GM12878 (cell line): ENCODE measurements at regions of chr5 and their contacts with region 1.

Region 1: GRCh38 chr5:151771259-151772028 is at the start of gene G3BP1:
- DNase-seq: peak; percentile 100
- ATAC-seq: peak; percentile 87
- H3K4me3 ChIP-seq: peak within 1 kb of the TSS; percentile 97
- H3K27ac ChIP-seq: peak within 1 kb of the TSS; percentile 98
- H3K4me1 ChIP-seq: peaks cover 10% of the 10 kb centered on the region
- H3K27me3 ChIP-seq: no peaks in the 10 kb centered on the region
- CTCF ChIP-seq: peak; percentile 64 to 99 (median 71); a peak in 4 of 6 replicates
- EP300 ChIP-seq: no peak
- POLR2A ChIP-seq: peak; percentile 18
- RAD21 ChIP-seq: peak; percentile 67
- polyA plus RNA-seq, gene G3BP1: 49.7 to 52.7 TPM

Region 2: GRCh38 chr5:151157426-151158286 is 613.8 kb before region 1 on chr5 and contains the start of gene ANXA6:
- CTCF ChIA-PET with region 1: no interaction called
- POLR2A ChIA-PET with region 1: no interaction called
- RAD21 ChIA-PET with region 1: no interaction called
- SMC1A ChIA-PET with region 1: no interaction called
- in situ Hi-C with region 1: no loop called
- intact Hi-C with region 1: loop called (anchors 10 kb)
- DNase-seq: no peak
- ATAC-seq: peak; percentile 77
- H3K4me3 ChIP-seq: peak within 1 kb of the TSS; percentile 97
- H3K27ac ChIP-seq: peak within 1 kb of the TSS; percentile 89
- H3K4me1 ChIP-seq: peaks cover 26% of the 10 kb centered on the region
- H3K27me3 ChIP-seq: no peaks in the 10 kb centered on the region
- CTCF ChIP-seq: no peak
- EP300 ChIP-seq: no peak
- POLR2A ChIP-seq: peak; percentile 81
- RAD21 ChIP-seq: no peak
- polyA plus RNA-seq, gene ANXA6: 44.0 to 73.1 TPM

Region 3: GRCh38 chr5:151751091-151751490 is 20.4 kb before region 1 on chr5:
- CTCF ChIA-PET with region 1: interaction called, 23 read pairs
- POLR2A ChIA-PET with region 1: interaction called, 241 read pairs
- RAD21 ChIA-PET with region 1: interaction called, 90 read pairs
- SMC1A ChIA-PET with region 1: interaction called, 84 read pairs
- in situ Hi-C with region 1: no loop called
- intact Hi-C with region 1: no loop called
- DNase-seq: no peak
- ATAC-seq: no peak
- H3K4me3 ChIP-seq: no peak overlapping the region
- H3K27ac ChIP-seq: no peak overlapping the region
- H3K4me1 ChIP-seq: peaks cover 29% of the 10 kb centered on the region
- H3K27me3 ChIP-seq: no peaks in the 10 kb centered on the region
- CTCF ChIP-seq: no peak
- EP300 ChIP-seq: no peak
- POLR2A ChIP-seq: no peak
- RAD21 ChIP-seq: no peak

Region 4: GRCh38 chr5:151758430-151759241 is 12.8 kb before region 1 on chr5 and contains the start of gene ATOX1:
- CTCF ChIA-PET with region 1: interaction called, 23 read pairs
- POLR2A ChIA-PET with region 1: interaction called, 241 read pairs
- RAD21 ChIA-PET with region 1: interaction called, 90 read pairs
- SMC1A ChIA-PET with region 1: interaction called, 84 read pairs
- in situ Hi-C with region 1: no loop called
- intact Hi-C with region 1: loop called (anchors 1 kb)
- DNase-seq: peak; percentile 58
- ATAC-seq: peak; percentile 96
- H3K4me3 ChIP-seq: peak within 1 kb of the TSS; percentile 98
- H3K27ac ChIP-seq: peak within 1 kb of the TSS; percentile 86
- H3K4me1 ChIP-seq: peaks cover 23% of the 10 kb centered on the region
- H3K27me3 ChIP-seq: no peaks in the 10 kb centered on the region
- CTCF ChIP-seq: peak in 1 of 3 experiments; percentile 9; a peak in 1 of 6 replicates
- EP300 ChIP-seq: no peak
- POLR2A ChIP-seq: peak; percentile 100
- RAD21 ChIP-seq: no peak
- polyA plus RNA-seq, gene ATOX1: 576 to 642 TPM

Region 5: DNA sequence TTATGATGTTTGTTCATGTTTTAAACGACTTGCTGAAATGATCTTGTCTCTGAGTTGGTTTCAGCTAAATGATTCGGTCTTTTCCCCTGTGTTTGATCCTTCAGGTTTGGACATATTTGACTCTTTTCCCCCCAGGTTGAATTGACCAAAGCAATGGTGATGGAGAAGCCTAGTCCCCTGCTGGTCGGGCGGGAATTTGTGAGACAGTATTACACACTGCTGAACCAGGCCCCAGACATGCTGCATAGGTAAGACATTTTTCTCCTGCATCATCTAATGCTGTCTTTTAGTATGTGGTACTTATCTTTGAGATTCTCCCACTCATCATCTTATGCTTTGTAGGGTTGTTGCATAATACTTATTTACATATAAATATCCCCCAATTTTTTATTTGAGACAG is 15.0 kb after region 1 on chr5:
- CTCF ChIA-PET with region 1: interaction called, 6 read pairs
- POLR2A ChIA-PET with region 1: interaction called, 16 read pairs
- RAD21 ChIA-PET with region 1: interaction called, 12 read pairs
- SMC1A ChIA-PET with region 1: interaction called, 17 read pairs
- in situ Hi-C with region 1: no loop called
- intact Hi-C with region 1: loop called (anchors 1 kb)
- DNase-seq: no peak
- ATAC-seq: no peak; the same call in 2 of the 3 replicates
- H3K4me3 ChIP-seq: no peak overlapping the region
- H3K27ac ChIP-seq: no peak overlapping the region
- H3K4me1 ChIP-seq: peaks cover 4% of the 10 kb centered on the region; the same call in 1 of the 2 replicates
- H3K27me3 ChIP-seq: no peaks in the 10 kb centered on the region
- CTCF ChIP-seq: no peak
- EP300 ChIP-seq: no peak
- POLR2A ChIP-seq: no peak
- RAD21 ChIP-seq: no peak

Region 6: DNA sequence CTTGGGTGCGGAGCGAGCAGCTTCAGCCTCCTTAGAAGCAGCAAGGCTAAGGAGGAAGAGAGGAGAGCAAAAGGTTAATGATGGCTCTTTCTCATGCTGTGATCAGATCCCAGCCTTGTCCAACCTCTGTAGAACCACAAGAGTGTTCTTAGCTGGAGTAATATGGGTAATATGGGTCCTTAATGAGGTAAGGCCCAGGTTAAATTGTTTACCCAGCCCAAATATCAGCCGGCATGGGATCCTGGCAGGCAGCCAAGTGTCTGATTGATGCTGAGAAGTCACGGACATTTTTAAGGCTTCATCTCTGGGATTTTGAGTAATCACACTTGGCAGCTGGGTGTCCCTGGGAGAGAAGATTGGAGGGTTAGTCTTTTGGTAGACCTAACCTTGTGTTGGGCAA is 120.9 kb after region 1 on chr5:
- CTCF ChIA-PET with region 1: no interaction called
- POLR2A ChIA-PET with region 1: no interaction called
- RAD21 ChIA-PET with region 1: no interaction called
- SMC1A ChIA-PET with region 1: no interaction called
- in situ Hi-C with region 1: no loop called
- intact Hi-C with region 1: no loop called
- DNase-seq: no peak
- ATAC-seq: no peak
- H3K4me3 ChIP-seq: no peak overlapping the region
- H3K27ac ChIP-seq: no peak overlapping the region
- H3K4me1 ChIP-seq: no peaks in the 10 kb centered on the region
- H3K27me3 ChIP-seq: no peaks in the 10 kb centered on the region
- CTCF ChIP-seq: no peak
- EP300 ChIP-seq: no peak
- POLR2A ChIP-seq: no peak
- RAD21 ChIP-seq: no peak